ENCODE measurements at regions of chr3 and their contacts with region 1.

Region 1: GRCh38 chr3:137013955-137014688 is 56.3 kb downstream of the IL20RB start:
- DNase-seq: peak; percentile 82
- CTCF ChIP-seq: peak; percentile 78

Region 2: DNA sequence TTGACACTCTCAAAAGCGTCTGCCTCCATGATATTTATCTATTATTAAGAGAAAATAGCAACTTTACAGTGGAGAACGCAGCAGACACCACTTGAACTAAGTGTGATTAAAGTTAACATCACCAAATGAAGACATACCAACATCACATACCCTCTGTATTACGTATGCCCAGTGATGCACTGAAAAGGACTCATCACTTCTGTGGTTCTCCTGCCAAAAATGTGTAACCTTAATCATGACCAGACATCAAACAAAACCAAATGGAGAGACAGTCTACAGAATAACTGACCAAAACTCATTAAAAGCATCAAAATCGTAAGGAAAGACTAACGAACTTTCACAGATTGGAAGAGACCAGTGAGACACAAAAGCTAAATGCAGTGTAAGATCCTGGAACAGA is 945.4 kb before region 1 on chr3:
- CTCF ChIA-PET with region 1: interaction called, 48 read pairs
- POLR2A ChIA-PET with region 1: no interaction called
- DNase-seq: no peak
- CTCF ChIP-seq: no peak

Region 3: GRCh38 chr3:136075218-136075808 is 938.8 kb before region 1 on chr3:
- CTCF ChIA-PET with region 1: interaction called, 48 read pairs
- POLR2A ChIA-PET with region 1: no interaction called
- DNase-seq: peak; percentile 49
- CTCF ChIP-seq: peak; percentile 93

Region 4: DNA sequence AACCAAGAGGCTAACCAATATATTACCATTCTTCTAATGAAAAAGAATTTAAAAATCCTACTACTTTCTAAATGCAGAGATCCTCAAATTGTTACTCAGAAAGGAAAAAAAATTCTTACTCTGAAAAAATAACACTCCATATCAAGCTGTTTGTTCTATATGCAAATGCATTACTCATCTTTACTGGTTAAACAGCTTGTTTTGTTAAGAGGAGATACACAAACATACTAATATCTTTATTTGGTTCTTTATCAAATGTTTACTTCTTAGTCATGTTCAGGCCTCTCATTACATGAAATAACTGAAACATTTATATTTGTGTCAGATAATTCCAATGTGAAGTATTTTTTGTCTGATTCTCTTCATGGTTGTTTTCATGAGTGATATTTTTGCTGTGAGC is 617.2 kb before region 1 on chr3:
- CTCF ChIA-PET with region 1: interaction called, 12 read pairs
- POLR2A ChIA-PET with region 1: no interaction called
- DNase-seq: no peak
- CTCF ChIP-seq: no peak

Region 5: GRCh38 chr3:136861890-136862616 is 152.1 kb before region 1 on chr3 and contains the start of gene NCK1:
- CTCF ChIA-PET with region 1: interaction called, 15 read pairs
- POLR2A ChIA-PET with region 1: no interaction called
- DNase-seq: peak; percentile 97
- CTCF ChIP-seq: peak; percentile 11

Region 6: GRCh38 chr3:137000039-137000438 is 14.1 kb before region 1 on chr3:
- CTCF ChIA-PET with region 1: interaction called, 11 read pairs
- POLR2A ChIA-PET with region 1: no interaction called
- DNase-seq: no peak
- CTCF ChIP-seq: no peak

Region 7: DNA sequence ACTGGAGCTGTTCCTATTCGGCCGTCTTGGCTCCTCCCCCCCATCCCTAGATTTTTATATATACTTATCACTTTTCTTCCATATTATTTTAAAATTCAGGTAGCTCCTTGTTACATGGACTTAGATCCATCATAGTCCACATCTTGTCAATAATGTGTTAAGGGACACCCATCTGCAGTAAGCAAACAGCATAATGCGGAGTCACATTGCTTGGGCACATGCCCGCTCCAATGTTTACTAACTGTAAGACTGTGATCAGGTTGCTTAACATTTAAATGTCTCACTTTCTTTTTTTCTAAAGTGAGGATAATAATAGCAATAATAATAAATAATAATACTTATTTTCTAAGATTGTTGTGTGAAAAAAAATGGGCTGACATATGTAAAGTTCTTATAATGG is 446.8 kb after region 1 on chr3:
- CTCF ChIA-PET with region 1: no interaction called
- POLR2A ChIA-PET with region 1: no interaction called
- DNase-seq: no peak
- CTCF ChIP-seq: no peak